Activated CD8-positive, alpha-beta memory T cell treated with anti-CD3 and anti-CD28 coated beads, Interleukin-2, amount 10 ng/mL, durations not matched to agents 7 days and 5 days (primary cell): ENCODE measurements at regions of chr16 and their contacts with region 1.

Region 1: GRCh38 chr16:67537270-67537635 is 8.6 kb downstream of the RIPOR1 start:
- DNase-seq: peak; percentile 59
- ATAC-seq: peak; percentile 52
- H3K4me3 Mint-ChIP-seq: peak overlapping the region; percentile 76
- H3K27ac Mint-ChIP-seq: peak overlapping the region; percentile 42
- H3K4me1 Mint-ChIP-seq: peaks cover 19% of the 10 kb centered on the region
- H3K27me3 Mint-ChIP-seq: peaks cover 34% of the 10 kb centered on the region

Region 2: DNA sequence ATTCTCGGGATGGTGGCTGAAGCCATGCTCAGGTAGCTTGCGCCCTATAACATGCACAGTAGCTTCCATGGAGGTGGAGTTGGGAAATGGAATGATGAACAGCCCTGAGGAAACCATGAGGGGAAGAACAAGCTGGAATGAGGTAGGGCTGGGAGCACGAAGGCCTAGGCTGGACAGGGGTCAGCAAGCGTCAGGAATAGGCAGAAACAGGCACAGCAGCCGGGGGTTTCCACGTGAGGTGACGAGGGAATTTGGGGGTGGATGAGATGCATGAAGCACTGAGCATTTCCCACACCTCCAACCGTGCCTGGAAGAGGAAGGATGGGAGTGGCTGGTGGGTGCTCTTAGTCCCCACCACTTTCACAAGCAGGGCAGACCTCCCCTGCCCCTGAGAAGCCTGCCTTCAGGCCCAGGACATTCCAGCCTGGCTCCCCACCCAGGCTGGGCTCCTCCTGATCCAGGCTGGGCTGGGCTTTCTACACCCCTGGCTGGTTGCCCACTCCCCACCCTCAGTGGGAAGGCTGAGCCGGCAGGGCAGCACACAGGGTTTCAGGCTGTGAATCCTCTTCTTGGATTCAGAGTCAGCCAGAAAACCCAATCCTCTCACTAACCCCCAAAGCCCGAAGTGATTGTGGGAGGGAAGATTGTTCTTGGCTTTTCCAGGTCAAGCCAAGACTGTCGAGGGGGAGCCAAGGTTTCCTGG is 236.0 kb before region 1 on chr16:
- CTCF ChIA-PET with region 1: no interaction called
- DNase-seq: no peak
- ATAC-seq: no peak
- H3K4me3 Mint-ChIP-seq: no peak overlapping the region
- H3K27ac Mint-ChIP-seq: no peak overlapping the region
- H3K4me1 Mint-ChIP-seq: no peaks in the 10 kb centered on the region
- H3K27me3 Mint-ChIP-seq: peaks cover 3% of the 10 kb centered on the region

Region 3: DNA sequence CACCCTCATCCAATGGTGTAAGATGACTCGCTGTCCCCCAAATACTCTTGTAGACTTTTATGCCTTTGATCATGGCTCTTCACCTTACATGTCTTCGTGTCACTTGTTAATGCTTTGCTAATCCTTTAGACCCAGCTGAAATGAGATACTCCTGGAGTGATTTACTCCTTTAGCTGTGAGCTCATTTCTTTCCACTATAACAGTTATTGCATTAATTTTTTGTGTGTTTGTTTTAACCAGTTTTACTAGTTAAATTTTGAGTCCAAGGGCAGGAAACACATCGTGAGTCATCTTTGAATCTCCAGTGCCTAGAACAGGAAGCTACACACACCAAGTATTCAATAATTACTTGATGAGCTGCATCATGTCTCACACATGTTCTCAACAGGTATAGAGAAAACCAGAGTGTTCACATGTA is 18.6 kb after region 1 on chr16:
- CTCF ChIA-PET with region 1: interaction called, 13 read pairs
- DNase-seq: no peak
- ATAC-seq: peak; percentile 94
- H3K4me3 Mint-ChIP-seq: peak overlapping the region; percentile 33
- H3K27ac Mint-ChIP-seq: peak overlapping the region; percentile 98
- H3K4me1 Mint-ChIP-seq: peaks cover 53% of the 10 kb centered on the region
- H3K27me3 Mint-ChIP-seq: no peaks in the 10 kb centered on the region

Region 4: GRCh38 chr16:67561824-67562525 is 24.7 kb after region 1 on chr16:
- CTCF ChIA-PET with region 1: interaction called, 13 read pairs
- DNase-seq: peak; percentile 100
- ATAC-seq: peak; percentile 88
- H3K4me3 Mint-ChIP-seq: peak overlapping the region; percentile 89
- H3K27ac Mint-ChIP-seq: peak overlapping the region; percentile 94
- H3K4me1 Mint-ChIP-seq: peaks cover 44% of the 10 kb centered on the region
- H3K27me3 Mint-ChIP-seq: no peaks in the 10 kb centered on the region

Region 5: GRCh38 chr16:67667817-67668494 is 130.7 kb after region 1 on chr16:
- CTCF ChIA-PET with region 1: interaction called, 10 read pairs
- DNase-seq: peak; percentile 90
- ATAC-seq: peak; percentile 81
- H3K4me3 Mint-ChIP-seq: no peak overlapping the region
- H3K27ac Mint-ChIP-seq: no peak overlapping the region
- H3K4me1 Mint-ChIP-seq: peaks cover 12% of the 10 kb centered on the region
- H3K27me3 Mint-ChIP-seq: no peaks in the 10 kb centered on the region